Activated CD4-positive, alpha-beta memory T cell treated with anti-CD3 and anti-CD28 coated beads for 36 hours (primary cell): ENCODE measurements at regions of chr2 and their contacts with region 1.

Region 1: GRCh38 chr2:200922439-200922838 is 33.3 kb downstream of the NIF3L1 start:
- DNase-seq: no peak
- H3K4me3 Mint-ChIP-seq: no peak overlapping the region
- H3K27ac Mint-ChIP-seq: peak overlapping the region; percentile 76
- H3K4me1 Mint-ChIP-seq: peaks cover 16% of the 10 kb centered on the region
- H3K27me3 Mint-ChIP-seq: no peaks in the 10 kb centered on the region

Region 2: GRCh38 chr2:200901459-200902072 is 20.9 kb before region 1 on chr2:
- CTCF ChIA-PET with region 1: interaction called, 3 read pairs
- POLR2A ChIA-PET with region 1: interaction called, 3 read pairs
- intact Hi-C with region 1: loop called (anchors 2 kb)
- DNase-seq: peak; percentile 79
- H3K4me3 Mint-ChIP-seq: no peak overlapping the region
- H3K27ac Mint-ChIP-seq: peak overlapping the region; percentile 69
- H3K4me1 Mint-ChIP-seq: peaks cover 9% of the 10 kb centered on the region
- H3K27me3 Mint-ChIP-seq: no peaks in the 10 kb centered on the region

Region 3: GRCh38 chr2:200944467-200945394 is 22.3 kb after region 1 on chr2:
- CTCF ChIA-PET with region 1: no interaction called
- POLR2A ChIA-PET with region 1: no interaction called
- intact Hi-C with region 1: loop called (anchors 1 kb)
- DNase-seq: peak; percentile 88
- H3K4me3 Mint-ChIP-seq: no peak overlapping the region
- H3K27ac Mint-ChIP-seq: peak overlapping the region; percentile 79
- H3K4me1 Mint-ChIP-seq: peaks cover 30% of the 10 kb centered on the region
- H3K27me3 Mint-ChIP-seq: no peaks in the 10 kb centered on the region

Region 4: GRCh38 chr2:201064797-201065329 is 142.4 kb after region 1 on chr2:
- CTCF ChIA-PET with region 1: interaction called, 3 read pairs
- POLR2A ChIA-PET with region 1: no interaction called
- intact Hi-C with region 1: loop called (anchors 5 kb)
- DNase-seq: no peak
- H3K4me3 Mint-ChIP-seq: no peak overlapping the region
- H3K27ac Mint-ChIP-seq: no peak overlapping the region
- H3K4me1 Mint-ChIP-seq: peaks cover 53% of the 10 kb centered on the region
- H3K27me3 Mint-ChIP-seq: peaks cover 1% of the 10 kb centered on the region